ENCODE measurements at regions of chr1 and their contacts with region 1.

Region 1: GRCh38 chr1:205750138-205751035 is at the start of gene NUCKS1:
- DNase-seq: peak; percentile 94 to 97
- H3K4me3 ChIP-seq: peak within 1 kb of the TSS; percentile 94 to 99 (median 96)
- H3K27ac ChIP-seq: peak within 1 kb of the TSS; percentile 95
- H3K4me1 ChIP-seq: peaks cover 0 to 10% (median 4%) of the 10 kb centered on the region in 4 experiments; a peak in 4 of 7 replicates
- H3K27me3 ChIP-seq: no peaks in the 10 kb centered on the region
- CTCF ChIP-seq: no peak; a peak in 1 of 4 replicates
- EP300 ChIP-seq: peak; percentile 11 to 81; a peak in 1 of 3 replicates
- POLR2A ChIP-seq: peak in 1 of 2 experiments; percentile 80; a peak in 2 of 3 replicates
- RAD21 ChIP-seq: no peak
- total RNA-seq, gene NUCKS1: 461 and 492 TPM in 2 replicates

Region 2: DNA sequence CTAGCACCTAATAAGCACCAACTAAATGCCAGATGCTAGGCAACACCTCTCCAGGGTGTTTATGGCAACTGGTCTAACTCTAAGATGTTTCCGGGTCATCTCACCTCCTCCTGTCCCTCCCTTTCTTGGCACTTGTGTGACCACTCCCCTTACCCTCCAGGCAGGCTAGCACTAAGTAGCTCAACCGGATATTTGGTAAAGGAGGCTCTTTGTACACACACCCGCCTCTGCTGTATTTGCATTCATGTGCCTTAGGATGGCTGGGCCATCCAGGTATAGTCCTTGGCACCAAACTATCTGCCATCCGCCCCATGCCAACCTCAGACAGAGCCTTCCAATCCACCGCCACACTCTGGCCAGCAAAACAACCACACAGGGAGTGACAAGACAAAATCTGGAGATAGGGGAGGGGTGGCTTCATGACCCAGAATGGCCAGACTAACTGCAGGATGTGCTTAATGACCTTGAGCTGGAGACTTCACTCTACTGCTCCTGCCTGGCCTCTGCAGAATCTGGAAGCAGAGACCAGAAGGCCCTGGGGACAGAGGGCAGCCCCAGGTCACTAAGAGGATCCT is 186.4 kb before region 1 on chr1:
- CTCF ChIA-PET with region 1: no interaction called
- POLR2A ChIA-PET with region 1: no interaction called
- DNase-seq: peak in 1 of 2 experiments; percentile 37
- H3K4me3 ChIP-seq: no peak overlapping the region
- H3K27ac ChIP-seq: no peak overlapping the region
- H3K4me1 ChIP-seq: peaks cover 0 to 5% (median under 1%) of the 10 kb centered on the region in 4 experiments; a peak in 3 of 7 replicates
- H3K27me3 ChIP-seq: peaks cover 9 to 20% (median 18%) of the 10 kb centered on the region in 4 experiments
- CTCF ChIP-seq: no peak
- EP300 ChIP-seq: no peak
- POLR2A ChIP-seq: no peak
- RAD21 ChIP-seq: no peak

Region 3: GRCh38 chr1:205729945-205730610 is 20.3 kb before region 1 on chr1:
- CTCF ChIA-PET with region 1: interaction called, 6 read pairs
- POLR2A ChIA-PET with region 1: interaction called, 61 read pairs
- DNase-seq: no peak
- H3K4me3 ChIP-seq: no peak overlapping the region
- H3K27ac ChIP-seq: no peak overlapping the region
- H3K4me1 ChIP-seq: no peaks in the 10 kb centered on the region
- H3K27me3 ChIP-seq: no peaks in the 10 kb centered on the region
- CTCF ChIP-seq: no peak
- EP300 ChIP-seq: no peak
- POLR2A ChIP-seq: no peak
- RAD21 ChIP-seq: no peak

Region 4: GRCh38 chr1:205739348-205740160 is 10.8 kb before region 1 on chr1:
- CTCF ChIA-PET with region 1: interaction called, 5 read pairs
- POLR2A ChIA-PET with region 1: interaction called, 61 read pairs
- DNase-seq: no peak
- H3K4me3 ChIP-seq: no peak overlapping the region
- H3K27ac ChIP-seq: no peak overlapping the region
- H3K4me1 ChIP-seq: peaks cover 3 to 11% (median 7%) of the 10 kb centered on the region in 4 experiments; a peak in 5 of 7 replicates
- H3K27me3 ChIP-seq: no peaks in the 10 kb centered on the region
- CTCF ChIP-seq: peak in 1 of 3 experiments; percentile 7; a peak in 1 of 4 replicates
- EP300 ChIP-seq: no peak
- POLR2A ChIP-seq: no peak
- RAD21 ChIP-seq: no peak

Region 5: GRCh38 chr1:205760606-205761005 is 10.2 kb after region 1 on chr1:
- CTCF ChIA-PET with region 1: interaction called, 5 read pairs
- POLR2A ChIA-PET with region 1: interaction called, 15 read pairs
- DNase-seq: no peak
- H3K4me3 ChIP-seq: no peak overlapping the region
- H3K27ac ChIP-seq: no peak overlapping the region
- H3K4me1 ChIP-seq: no peaks in the 10 kb centered on the region
- H3K27me3 ChIP-seq: no peaks in the 10 kb centered on the region
- CTCF ChIP-seq: no peak
- EP300 ChIP-seq: no peak
- POLR2A ChIP-seq: no peak
- RAD21 ChIP-seq: no peak

Region 6: GRCh38 chr1:205775015-205775716 is 24.8 kb after region 1 on chr1 and contains the start of gene RAB29:
- CTCF ChIA-PET with region 1: interaction called, 4 read pairs
- POLR2A ChIA-PET with region 1: interaction called, 12 read pairs
- DNase-seq: peak; percentile 38 to 86
- H3K4me3 ChIP-seq: peak within 1 kb of the TSS; percentile 66 to 84 (median 76)
- H3K27ac ChIP-seq: no peak within 1 kb of the TSS
- H3K4me1 ChIP-seq: peaks cover 0 to 7% (median 5%) of the 10 kb centered on the region in 4 experiments; a peak in 4 of 7 replicates
- H3K27me3 ChIP-seq: peaks cover 2 to 11% (median 9%) of the 10 kb centered on the region in 4 experiments; a peak in 6 of 7 replicates
- CTCF ChIP-seq: no peak
- EP300 ChIP-seq: no peak
- POLR2A ChIP-seq: no peak
- RAD21 ChIP-seq: no peak
- total RNA-seq, gene RAB29: 16.4 and 17.3 TPM in 2 replicates